CD4-positive, alpha-beta T cell (primary cell): ENCODE measurements at regions of chr9 and their contacts with region 1.

Region 1: GRCh38 chr9:78035383-78035993 is 3.9 kb upstream of the GNAQ start:
- DNase-seq: peak; percentile 18 to 89 (median 40)
- ATAC-seq: no peak
- H3K4me3 ChIP-seq: no peak overlapping the region
- H3K4me3 Mint-ChIP-seq: peak overlapping the region; percentile 45
- H3K27ac ChIP-seq: no peak overlapping the region
- H3K27ac Mint-ChIP-seq: peak overlapping the region; percentile 88
- H3K4me1 ChIP-seq: peaks cover 23% of the 10 kb centered on the region
- H3K4me1 Mint-ChIP-seq: peaks cover 36% of the 10 kb centered on the region
- H3K27me3 ChIP-seq: no peaks in the 10 kb centered on the region
- H3K27me3 Mint-ChIP-seq: no peaks in the 10 kb centered on the region
- CTCF ChIP-seq: peak; percentile 90

Region 2: DNA sequence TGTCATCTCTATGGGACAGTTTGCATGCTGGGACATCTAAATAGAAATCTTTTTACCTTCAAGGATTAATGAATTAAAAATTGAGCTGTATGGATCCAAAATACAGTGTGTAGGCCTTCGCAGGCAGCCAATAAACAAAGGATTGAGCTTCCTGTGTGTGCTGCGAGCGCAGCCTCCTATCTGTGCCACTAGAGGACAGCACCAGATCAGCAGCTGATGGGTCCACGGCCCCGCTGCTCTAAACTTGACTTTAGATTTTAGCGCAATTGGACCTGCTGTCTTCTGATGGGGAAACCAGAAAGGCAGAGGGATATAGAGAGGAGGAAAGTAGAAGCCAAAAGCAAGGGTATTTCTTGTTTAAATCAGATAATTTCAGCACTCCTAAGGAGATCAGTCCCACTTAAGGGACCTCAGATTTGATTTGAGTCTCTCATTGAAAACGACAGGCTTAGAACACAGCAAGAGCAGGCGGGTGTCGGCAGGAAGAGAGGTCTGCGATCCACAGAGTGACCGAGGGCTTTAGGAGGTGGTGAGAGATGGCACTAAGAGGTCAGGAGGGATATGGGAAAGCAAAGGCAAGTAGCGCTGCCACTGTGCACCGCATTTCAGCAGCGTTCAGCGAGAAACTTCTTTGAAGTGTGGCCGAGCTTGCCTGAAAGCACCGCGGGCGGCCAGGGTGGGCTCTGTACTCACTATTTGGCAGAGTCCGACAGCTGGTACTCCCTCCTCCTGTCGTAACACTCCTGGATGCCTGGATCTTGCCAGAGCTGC is 601.6 kb before region 1 on chr9:
- CTCF ChIA-PET with region 1: no interaction called
- POLR2A ChIA-PET with region 1: no interaction called
- intact Hi-C with region 1: loop called in 1 of 2 experiments (anchors 1 kb)
- DNase-seq: peak; percentile 14 to 71 (median 38)
- ATAC-seq: peak; percentile 91
- H3K4me3 ChIP-seq: no peak overlapping the region
- H3K4me3 Mint-ChIP-seq: no peak overlapping the region
- H3K27ac ChIP-seq: no peak overlapping the region
- H3K27ac Mint-ChIP-seq: no peak overlapping the region
- H3K4me1 ChIP-seq: peaks cover 5% of the 10 kb centered on the region
- H3K4me1 Mint-ChIP-seq: peaks cover 5% of the 10 kb centered on the region
- H3K27me3 ChIP-seq: no peaks in the 10 kb centered on the region
- H3K27me3 Mint-ChIP-seq: peaks cover 5% of the 10 kb centered on the region
- CTCF ChIP-seq: peak; percentile 92

Region 3: DNA sequence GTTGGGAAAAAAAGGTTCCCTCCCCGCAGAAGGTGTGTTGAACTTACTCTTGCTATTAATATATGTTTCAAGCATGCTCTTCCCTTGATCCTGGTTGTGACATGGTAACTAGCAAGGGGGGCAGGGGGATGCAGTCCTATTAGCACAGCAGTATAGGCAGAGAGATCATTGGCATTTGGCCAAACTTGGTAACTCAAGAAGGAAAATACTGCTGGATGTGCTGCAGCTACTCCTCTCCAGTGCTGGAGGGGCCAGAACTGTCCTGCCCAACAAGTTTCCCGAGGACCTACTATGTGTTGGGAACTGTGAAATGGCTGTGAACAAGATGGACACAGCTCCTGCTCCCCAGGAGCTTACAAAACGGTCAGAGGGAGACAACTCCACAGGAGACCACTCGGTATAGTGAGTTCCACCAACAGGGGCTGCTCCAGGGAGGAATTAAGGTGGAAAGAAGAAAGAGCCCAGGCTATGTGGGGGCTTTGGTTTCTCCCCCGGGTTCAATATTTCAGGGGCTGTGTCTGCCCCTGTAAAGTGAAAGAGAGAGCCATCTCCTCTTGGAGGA is 466.2 kb before region 1 on chr9:
- CTCF ChIA-PET with region 1: no interaction called
- POLR2A ChIA-PET with region 1: no interaction called
- intact Hi-C with region 1: loop called in 1 of 2 experiments (anchors 10 kb)
- DNase-seq: no peak
- ATAC-seq: no peak
- H3K4me3 ChIP-seq: no peak overlapping the region
- H3K4me3 Mint-ChIP-seq: no peak overlapping the region
- H3K27ac ChIP-seq: no peak overlapping the region
- H3K27ac Mint-ChIP-seq: no peak overlapping the region
- H3K4me1 ChIP-seq: no peaks in the 10 kb centered on the region
- H3K4me1 Mint-ChIP-seq: no peaks in the 10 kb centered on the region
- H3K27me3 ChIP-seq: peaks cover 0 to 4% of the 10 kb centered on the region in 2 experiments
- H3K27me3 Mint-ChIP-seq: peaks cover 19% of the 10 kb centered on the region
- CTCF ChIP-seq: no peak

Region 4: DNA sequence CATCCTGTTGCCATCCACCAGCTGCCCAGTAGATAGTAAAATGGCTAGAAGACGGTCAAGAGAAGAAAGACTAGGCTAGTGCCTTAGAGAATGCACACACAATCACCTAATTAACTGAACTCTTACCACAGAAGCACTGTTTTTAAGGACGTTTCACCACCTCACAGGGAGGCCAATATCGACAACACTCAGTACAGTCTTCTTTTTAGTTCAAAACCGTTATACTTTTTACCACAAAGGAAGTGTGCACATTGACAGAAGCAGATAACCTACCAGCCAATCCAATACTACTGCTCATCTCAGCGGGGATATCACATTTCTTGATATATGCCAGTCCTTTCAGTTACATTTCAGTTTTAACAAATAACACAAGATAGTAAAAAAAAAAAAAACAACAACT is 126.2 kb before region 1 on chr9:
- CTCF ChIA-PET with region 1: no interaction called
- POLR2A ChIA-PET with region 1: interaction called, 4 read pairs
- intact Hi-C with region 1: loop called in 1 of 2 experiments (anchors 5 kb)
- DNase-seq: peak in 5 of 14 experiments; percentile 6 to 68 (median 50)
- ATAC-seq: peak; percentile 99
- H3K4me3 ChIP-seq: no peak overlapping the region
- H3K4me3 Mint-ChIP-seq: peak overlapping the region; percentile 73
- H3K27ac ChIP-seq: peak overlapping the region; percentile 27 to 36
- H3K27ac Mint-ChIP-seq: peak overlapping the region; percentile 86
- H3K4me1 ChIP-seq: peaks cover 11% of the 10 kb centered on the region
- H3K4me1 Mint-ChIP-seq: peaks cover 54% of the 10 kb centered on the region
- H3K27me3 ChIP-seq: no peaks in the 10 kb centered on the region
- H3K27me3 Mint-ChIP-seq: no peaks in the 10 kb centered on the region
- CTCF ChIP-seq: no peak

Region 5: DNA sequence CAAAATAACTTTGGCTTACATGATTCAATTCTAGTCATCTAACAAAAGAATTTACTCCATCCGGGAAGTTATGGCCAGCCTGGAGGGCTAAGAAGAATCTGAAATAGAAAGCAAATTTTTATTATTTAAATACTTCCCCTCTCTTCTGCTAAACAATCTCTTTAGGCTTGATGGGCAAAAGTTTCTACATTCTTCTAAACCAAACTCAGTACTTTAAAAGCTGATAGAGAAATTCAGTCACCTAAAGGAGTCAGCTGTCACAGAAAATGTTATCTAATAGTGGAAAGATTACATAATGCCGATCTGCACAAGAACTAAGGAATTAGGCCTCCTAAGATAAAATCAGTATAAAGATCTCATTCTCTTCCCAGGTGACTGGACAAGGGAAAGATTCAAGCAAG is 36.3 kb before region 1 on chr9:
- CTCF ChIA-PET with region 1: interaction called, 11 read pairs
- POLR2A ChIA-PET with region 1: interaction called, 3 read pairs
- intact Hi-C with region 1: loop called in 1 of 2 experiments (anchors 2 kb)
- DNase-seq: no peak
- ATAC-seq: no peak
- H3K4me3 ChIP-seq: no peak overlapping the region
- H3K4me3 Mint-ChIP-seq: no peak overlapping the region
- H3K27ac ChIP-seq: no peak overlapping the region
- H3K27ac Mint-ChIP-seq: no peak overlapping the region
- H3K4me1 ChIP-seq: peaks cover 7% of the 10 kb centered on the region
- H3K4me1 Mint-ChIP-seq: peaks cover 72% of the 10 kb centered on the region
- H3K27me3 ChIP-seq: no peaks in the 10 kb centered on the region
- H3K27me3 Mint-ChIP-seq: no peaks in the 10 kb centered on the region
- CTCF ChIP-seq: no peak

Region 6: DNA sequence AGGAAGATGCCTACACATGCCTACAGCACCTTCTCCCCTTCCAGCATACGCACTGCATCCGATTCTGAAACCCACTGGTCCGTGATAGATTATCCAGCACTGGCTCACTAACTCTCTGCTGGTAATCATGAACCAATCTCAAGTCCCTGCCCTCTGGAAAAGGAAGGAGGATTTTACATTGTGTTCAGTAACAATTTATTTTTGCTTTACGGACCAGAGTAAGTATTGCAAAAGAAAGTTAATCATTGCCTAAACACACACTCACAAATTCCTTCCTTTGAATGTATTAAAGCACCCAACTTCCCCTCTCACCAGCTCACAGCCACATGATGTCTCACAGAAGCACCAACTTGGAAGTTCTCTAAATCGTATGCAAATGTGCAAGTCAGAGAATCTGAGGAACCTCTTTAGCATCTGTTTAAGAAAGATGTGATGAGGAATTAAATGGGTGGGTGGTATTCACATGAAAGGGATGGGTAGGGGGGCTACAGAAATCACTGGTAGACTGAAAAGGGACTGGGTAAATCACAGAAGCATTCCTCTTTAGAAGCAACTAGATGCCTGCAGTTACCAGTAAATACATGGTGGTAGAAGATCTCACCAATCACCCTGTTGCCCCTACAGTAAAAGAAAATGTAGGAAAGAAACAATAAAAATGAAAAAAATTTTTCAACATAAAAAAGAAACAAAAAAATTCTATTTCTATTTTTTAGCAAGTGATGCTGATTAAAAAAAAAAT is 12.3 kb before region 1 on chr9:
- CTCF ChIA-PET with region 1: no interaction called
- POLR2A ChIA-PET with region 1: interaction called, 10 read pairs
- intact Hi-C with region 1: no loop called
- DNase-seq: peak in 3 of 14 experiments; percentile 16 to 67 (median 58)
- ATAC-seq: peak; percentile 41
- H3K4me3 ChIP-seq: no peak overlapping the region
- H3K4me3 Mint-ChIP-seq: peak overlapping the region; percentile 73
- H3K27ac ChIP-seq: no peak overlapping the region
- H3K27ac Mint-ChIP-seq: no peak overlapping the region
- H3K4me1 ChIP-seq: peaks cover 26% of the 10 kb centered on the region
- H3K4me1 Mint-ChIP-seq: peaks cover 86% of the 10 kb centered on the region
- H3K27me3 ChIP-seq: no peaks in the 10 kb centered on the region
- H3K27me3 Mint-ChIP-seq: no peaks in the 10 kb centered on the region
- CTCF ChIP-seq: no peak

Region 7: GRCh38 chr9:78121488-78121887 is 86.0 kb after region 1 on chr9:
- CTCF ChIA-PET with region 1: no interaction called
- POLR2A ChIA-PET with region 1: interaction called, 14 read pairs
- intact Hi-C with region 1: loop called in 1 of 2 experiments (anchors 2 kb)
- DNase-seq: peak; percentile 20 to 81 (median 50)
- ATAC-seq: no peak
- H3K4me3 ChIP-seq: no peak overlapping the region
- H3K4me3 Mint-ChIP-seq: no peak overlapping the region
- H3K27ac ChIP-seq: no peak overlapping the region
- H3K27ac Mint-ChIP-seq: peak overlapping the region; percentile 85
- H3K4me1 ChIP-seq: peaks cover 19% of the 10 kb centered on the region
- H3K4me1 Mint-ChIP-seq: peaks cover 62% of the 10 kb centered on the region
- H3K27me3 ChIP-seq: no peaks in the 10 kb centered on the region
- H3K27me3 Mint-ChIP-seq: no peaks in the 10 kb centered on the region
- CTCF ChIP-seq: peak; percentile 80